ENCODE measurements at regions of chr16 and their contacts with region 1.

Region 1: GRCh38 chr16:11255737-11256660 is at the start of gene SOCS1:
- DNase-seq: peak; percentile 80 to 96 (median 90)
- ATAC-seq: peak; percentile 66
- H3K4me3 Mint-ChIP-seq: peak within 1 kb of the TSS; percentile 91 to 98 (median 95)
- H3K27ac Mint-ChIP-seq: peak within 1 kb of the TSS; percentile 92 to 99 (median 98)
- H3K4me1 Mint-ChIP-seq: peaks cover 30 to 58% (median 57%) of the 10 kb centered on the region in 4 donors
- H3K27me3 Mint-ChIP-seq: no peaks in the 10 kb centered on the region
- polyA plus RNA-seq, gene SOCS1: 13.5 to 24.0 (median 13.5) TPM

Region 2: DNA sequence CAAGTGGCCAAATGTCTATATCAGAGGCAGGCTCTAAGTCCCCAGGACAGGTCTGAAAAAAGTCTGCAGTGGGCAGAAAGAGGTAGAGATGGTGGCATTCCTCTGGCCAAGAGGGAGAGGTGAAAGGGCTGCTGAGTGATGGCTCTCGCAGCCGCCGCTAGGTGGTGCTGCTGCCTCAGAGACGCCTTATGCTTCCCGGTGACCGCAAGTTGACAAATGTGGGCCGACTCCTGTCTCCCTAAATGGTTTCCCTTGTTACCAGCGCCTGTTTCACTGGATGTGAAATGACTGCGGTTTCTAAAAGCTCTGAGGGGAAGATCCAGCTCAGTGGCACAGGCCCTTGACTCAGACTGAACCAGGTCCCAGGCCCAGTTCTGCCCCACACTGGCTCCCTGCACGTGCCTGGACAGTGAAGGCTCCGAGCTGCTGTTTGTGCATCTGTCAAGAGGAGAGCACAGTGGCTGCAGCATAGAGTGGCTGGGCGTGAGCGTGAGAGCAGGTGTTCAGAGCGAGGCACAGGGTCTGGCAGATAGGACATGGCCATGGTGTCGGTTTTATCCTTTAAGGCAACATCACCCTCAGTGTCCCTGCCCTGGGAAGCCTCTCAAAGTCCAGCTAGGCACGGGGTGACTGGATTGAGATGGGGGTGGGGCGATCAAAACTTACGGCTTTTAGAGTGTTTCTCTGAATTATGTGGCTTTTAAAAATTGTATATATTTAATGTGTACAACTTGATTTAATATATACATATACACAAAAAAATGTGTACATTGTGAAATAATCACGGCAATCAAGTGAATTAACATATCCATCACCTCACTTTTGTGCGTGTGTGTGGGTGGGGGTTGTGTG is 291.7 kb before region 1 on chr16:
- POLR2A ChIA-PET with region 1: interaction called, 33 read pairs
- DNase-seq: peak; percentile 52 to 84 (median 74)
- ATAC-seq: peak; percentile 84 to 93
- H3K4me3 Mint-ChIP-seq: peak overlapping the region in 6 of 10 donors; percentile 19 to 48 (median 30)
- H3K27ac Mint-ChIP-seq: peak overlapping the region in 6 of 10 donors; percentile 16 to 73 (median 63)
- H3K4me1 Mint-ChIP-seq: peaks cover 17 to 29% (median 23%) of the 10 kb centered on the region in 4 donors
- H3K27me3 Mint-ChIP-seq: no peaks in the 10 kb centered on the region

Region 3: GRCh38 chr16:11094072-11094856 is 161.7 kb before region 1 on chr16:
- POLR2A ChIA-PET with region 1: interaction called, 11 read pairs
- DNase-seq: no peak
- ATAC-seq: peak; percentile 55 to 58
- H3K4me3 Mint-ChIP-seq: peak overlapping the region in 8 of 10 donors; percentile 42 to 79 (median 60)
- H3K27ac Mint-ChIP-seq: peak overlapping the region; percentile 12 to 97 (median 85)
- H3K4me1 Mint-ChIP-seq: peaks cover 23 to 37% (median 32%) of the 10 kb centered on the region in 4 donors
- H3K27me3 Mint-ChIP-seq: no peaks in the 10 kb centered on the region

Region 4: DNA sequence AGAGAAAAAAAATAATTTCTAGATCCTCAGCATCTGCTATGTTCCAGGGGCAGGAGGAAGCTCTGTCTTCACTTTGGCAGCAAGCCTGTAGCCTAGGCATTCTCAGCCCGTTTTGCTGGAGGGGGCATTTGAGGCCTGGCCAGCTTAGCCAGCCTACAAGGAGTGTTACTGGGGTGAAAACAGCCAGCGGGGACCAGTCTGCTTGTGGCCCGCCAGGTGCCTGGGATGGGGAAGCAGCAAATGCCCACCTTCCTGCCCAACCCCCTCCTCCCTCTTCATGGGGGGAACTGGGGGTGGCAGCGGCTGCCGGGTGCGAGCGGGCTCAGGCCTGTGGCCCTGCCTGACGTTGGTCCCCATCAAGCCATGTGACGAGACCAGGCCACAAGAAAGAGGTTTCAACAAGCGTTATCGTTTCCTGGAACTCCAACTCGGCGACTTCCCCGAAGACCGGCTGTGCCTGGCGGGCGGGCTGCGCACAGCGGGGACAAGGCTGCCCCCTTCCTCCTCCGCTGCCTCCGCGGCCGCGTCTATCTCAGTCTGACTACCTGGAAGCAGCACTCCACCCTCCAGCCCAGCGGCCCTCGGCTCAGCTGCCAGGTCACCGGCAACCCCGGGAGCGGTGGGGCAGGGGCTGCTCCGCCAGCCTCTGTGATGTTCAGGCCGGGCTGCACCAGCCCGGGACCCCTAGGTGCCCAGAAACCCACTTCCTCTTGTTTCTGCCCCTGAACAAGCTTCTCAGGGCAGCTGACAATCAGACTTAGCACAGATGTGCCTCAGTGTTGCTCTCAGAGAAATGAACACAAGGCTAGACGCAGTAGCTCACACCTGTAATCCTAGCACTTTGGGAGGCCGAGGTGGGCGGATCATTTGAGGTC is 22.9 kb before region 1 on chr16:
- POLR2A ChIA-PET with region 1: interaction called, 55 read pairs
- DNase-seq: peak; percentile 67 to 93 (median 86)
- ATAC-seq: peak; percentile 88 to 90
- H3K4me3 Mint-ChIP-seq: peak overlapping the region; percentile 63 to 84 (median 77)
- H3K27ac Mint-ChIP-seq: peak overlapping the region; percentile 92 to 99 (median 97)
- H3K4me1 Mint-ChIP-seq: peaks cover 30 to 69% (median 65%) of the 10 kb centered on the region in 4 donors
- H3K27me3 Mint-ChIP-seq: no peaks in the 10 kb centered on the region

Region 5: DNA sequence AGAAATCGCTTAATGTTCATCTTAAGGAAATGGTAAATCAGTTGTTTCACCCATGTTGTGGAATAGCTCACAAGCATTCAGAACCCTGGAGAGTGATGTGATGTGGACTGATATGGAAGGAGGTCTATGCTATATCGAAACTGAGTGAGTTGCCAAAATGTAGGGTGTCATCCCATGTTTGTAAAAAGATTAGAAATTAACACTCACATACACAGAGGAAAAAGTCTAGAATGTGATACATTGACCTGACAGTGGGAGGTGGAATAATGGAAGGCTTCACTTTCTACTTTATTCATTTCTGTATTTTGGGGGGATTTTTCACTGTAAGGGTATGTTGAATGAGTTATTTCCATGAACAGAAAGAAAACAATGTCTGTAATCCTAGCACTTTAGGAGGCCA is 29.8 kb after region 1 on chr16:
- POLR2A ChIA-PET with region 1: no interaction called
- DNase-seq: no peak
- ATAC-seq: no peak
- H3K4me3 Mint-ChIP-seq: no peak overlapping the region
- H3K27ac Mint-ChIP-seq: no peak overlapping the region
- H3K4me1 Mint-ChIP-seq: peaks cover 0 to 7% (median 3%) of the 10 kb centered on the region in 4 donors
- H3K27me3 Mint-ChIP-seq: peaks cover 0 to 3% (median 0%) of the 10 kb centered on the region in 5 donors

Region 6: DNA sequence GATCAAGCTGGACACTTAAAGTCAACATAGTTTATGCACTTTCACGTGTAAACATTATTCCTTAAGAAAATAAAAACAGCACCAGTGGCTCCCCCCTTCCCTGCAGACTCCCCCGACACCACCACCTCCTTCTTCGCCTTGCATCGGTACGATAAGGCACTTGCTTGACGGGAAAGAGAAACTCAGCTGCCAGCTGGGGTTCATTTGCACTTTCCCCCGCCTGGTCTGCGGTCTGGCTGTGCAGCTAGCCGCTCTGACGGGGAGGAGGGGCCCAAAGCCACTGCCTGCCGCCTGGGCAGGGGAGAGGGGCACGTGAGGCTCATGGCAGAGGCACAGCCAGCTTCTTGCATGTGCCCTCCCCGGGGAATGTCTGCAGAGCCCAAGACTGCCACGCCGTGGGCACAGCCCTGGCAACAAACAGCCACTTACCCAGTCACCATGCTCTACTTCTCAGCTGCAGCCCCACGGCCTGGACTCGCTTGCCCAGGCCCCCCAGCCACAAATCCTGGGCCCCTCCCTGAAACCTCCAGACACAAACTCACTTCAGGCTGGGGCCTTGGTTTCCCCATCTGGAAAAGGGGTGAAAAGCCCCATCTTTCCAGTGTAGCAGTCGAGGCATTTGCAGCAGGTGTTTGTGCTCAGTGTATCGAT is 41.6 kb after region 1 on chr16:
- POLR2A ChIA-PET with region 1: interaction called, 65 read pairs
- DNase-seq: peak; percentile 31 to 84 (median 70)
- ATAC-seq: peak; percentile 91 to 96
- H3K4me3 Mint-ChIP-seq: peak overlapping the region; percentile 66 to 86 (median 76)
- H3K27ac Mint-ChIP-seq: peak overlapping the region in 9 of 10 donors; percentile 65 to 92 (median 84)
- H3K4me1 Mint-ChIP-seq: peaks cover 14 to 58% (median 47%) of the 10 kb centered on the region in 4 donors
- H3K27me3 Mint-ChIP-seq: peaks cover 0 to 3% (median 2%) of the 10 kb centered on the region in 5 donors

Region 7: DNA sequence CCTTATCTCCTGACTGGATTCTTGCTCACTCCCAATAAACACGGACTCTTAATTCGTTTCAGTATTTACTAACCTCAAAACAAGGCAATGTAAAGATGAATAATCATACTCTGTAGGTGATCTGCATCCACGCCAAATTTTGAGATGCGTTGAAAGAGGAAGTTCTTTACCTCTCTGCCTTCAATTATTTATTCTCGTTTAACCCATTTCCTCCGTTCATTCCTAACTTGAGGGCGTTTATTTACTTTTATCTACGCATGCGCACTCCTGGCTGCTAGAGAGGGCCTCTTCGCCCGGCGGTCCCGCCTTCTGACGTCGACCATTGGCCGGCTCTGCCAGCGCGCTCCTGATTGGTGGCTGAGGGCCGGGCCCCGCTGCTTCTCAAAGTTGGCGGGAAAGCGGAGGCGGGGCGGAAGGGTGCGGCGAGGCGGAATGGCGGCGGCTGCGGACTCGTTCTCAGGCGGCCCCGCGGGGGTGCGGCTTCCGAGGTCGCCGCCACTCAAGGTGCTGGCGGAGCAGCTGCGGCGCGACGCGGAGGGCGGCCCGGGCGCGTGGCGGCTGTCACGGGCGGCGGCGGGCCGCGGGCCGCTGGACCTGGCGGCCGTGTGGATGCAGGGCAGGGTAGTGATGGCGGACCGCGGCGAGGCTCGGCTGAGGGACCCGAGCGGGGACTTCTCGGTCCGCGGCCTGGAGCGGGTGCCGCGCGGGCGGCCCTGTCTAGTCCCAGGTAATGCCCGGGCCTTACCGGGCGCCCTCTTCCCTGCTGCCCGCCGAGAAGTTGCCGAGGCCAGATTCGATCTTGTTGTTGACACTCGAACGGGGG is 89.3 kb after region 1 on chr16 and contains the start of gene RMI2:
- POLR2A ChIA-PET with region 1: interaction called, 19 read pairs
- DNase-seq: peak; percentile 90 to 98 (median 95)
- ATAC-seq: peak; percentile 99 to 100
- H3K4me3 Mint-ChIP-seq: peak within 1 kb of the TSS; percentile 84 to 96 (median 90)
- H3K27ac Mint-ChIP-seq: peak within 1 kb of the TSS; percentile 74 to 97 (median 90)
- H3K4me1 Mint-ChIP-seq: peaks cover 8 to 44% (median 20%) of the 10 kb centered on the region in 4 donors
- H3K27me3 Mint-ChIP-seq: no peaks in the 10 kb centered on the region
- polyA plus RNA-seq, gene RMI2: 1.3 to 13.5 (median 7.1) TPM

Region 8: GRCh38 chr16:11361701-11362451 is 105.9 kb after region 1 on chr16:
- POLR2A ChIA-PET with region 1: interaction called, 107 read pairs
- DNase-seq: peak in 3 of 10 donors; percentile 17 to 45 (median 30)
- ATAC-seq: peak; percentile 67 to 85
- H3K4me3 Mint-ChIP-seq: peak overlapping the region; percentile 64 to 89 (median 82)
- H3K27ac Mint-ChIP-seq: peak overlapping the region in 9 of 10 donors; percentile 4 to 86 (median 51)
- H3K4me1 Mint-ChIP-seq: peaks cover 23 to 49% (median 40%) of the 10 kb centered on the region in 4 donors
- H3K27me3 Mint-ChIP-seq: peaks cover 0 to 23% (median 0%) of the 10 kb centered on the region in 5 donors

Region 9: DNA sequence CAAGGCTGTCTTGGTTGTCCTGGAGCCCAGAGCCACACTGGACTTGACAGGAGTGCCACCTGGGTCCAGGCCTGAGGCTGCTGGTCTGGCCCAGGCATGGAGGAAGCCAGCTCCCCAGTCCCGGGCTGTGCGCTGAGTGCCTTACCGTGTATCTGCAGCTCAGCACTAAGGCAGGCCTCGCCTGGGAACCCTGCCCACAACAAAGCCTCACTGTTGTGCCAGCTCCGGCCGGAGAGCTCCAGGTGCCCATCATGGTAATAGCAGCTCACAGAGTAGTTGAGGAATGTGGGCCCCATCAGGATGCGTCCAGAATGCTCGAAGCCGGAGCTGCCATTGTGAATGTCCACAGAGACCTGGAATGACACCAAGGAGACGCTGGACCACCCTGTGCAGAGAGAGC is 161.5 kb after region 1 on chr16:
- POLR2A ChIA-PET with region 1: no interaction called
- DNase-seq: no peak
- ATAC-seq: no peak
- H3K4me3 Mint-ChIP-seq: no peak overlapping the region
- H3K27ac Mint-ChIP-seq: no peak overlapping the region
- H3K4me1 Mint-ChIP-seq: peaks cover 0 to 2% (median 0%) of the 10 kb centered on the region in 4 donors
- H3K27me3 Mint-ChIP-seq: no peaks in the 10 kb centered on the region

Measured in naive thymus-derived CD8-positive, alpha-beta T cell (primary cell).